SK-N-SH (cell line): ENCODE measurements at regions of chr11 and their contacts with region 1.

Region 1: DNA sequence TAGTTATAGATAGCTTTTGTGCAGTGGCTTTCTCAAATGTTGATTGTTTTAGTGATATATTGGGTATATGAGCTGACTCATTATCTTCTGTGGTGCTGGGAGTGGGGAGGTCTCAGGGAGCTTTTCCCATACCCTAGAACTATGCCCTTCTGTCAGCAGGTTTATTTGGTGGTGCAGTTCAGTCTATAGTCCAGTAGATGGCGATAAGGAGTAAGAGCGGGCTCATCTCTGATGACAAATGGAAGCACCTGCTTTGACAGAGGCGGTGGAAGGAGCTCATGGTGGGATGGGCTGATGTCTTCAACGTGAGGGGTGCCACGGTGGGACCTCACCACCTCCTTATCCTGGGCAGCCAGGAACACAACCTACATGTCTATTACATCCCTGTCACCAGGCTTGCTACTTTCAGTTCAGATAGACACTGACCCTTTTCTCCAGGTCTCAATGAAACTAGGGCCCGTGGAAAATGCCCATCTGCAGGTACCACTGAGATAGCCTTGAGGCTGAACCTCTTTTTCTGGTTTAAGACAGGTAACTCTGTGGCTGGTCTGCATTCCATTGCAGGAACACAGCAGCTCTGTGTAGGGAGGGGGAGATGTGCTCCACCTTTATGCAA is 13.0 kb upstream of the OR6A2 start:
- DNase-seq: peak; percentile 57
- H3K4me3 ChIP-seq: no peak overlapping the region; a peak in 1 of 4 replicates
- H3K27ac ChIP-seq: no peak overlapping the region
- H3K4me1 ChIP-seq: no peaks in the 10 kb centered on the region
- H3K27me3 ChIP-seq: no peaks in the 10 kb centered on the region
- CTCF ChIP-seq: peak; percentile 88
- EP300 ChIP-seq: no peak
- RAD21 ChIP-seq: peak; percentile 51

Region 2: GRCh38 chr11:6603287-6604080 is 209.0 kb before region 1 on chr11 and contains the starts of genes ILK and RRP8:
- CTCF ChIA-PET with region 1: no interaction called
- POLR2A ChIA-PET with region 1: no interaction called
- DNase-seq: peak; percentile 96
- H3K4me3 ChIP-seq: peak within 1 kb of the TSS; percentile 67 to 95
- H3K27ac ChIP-seq: peak within 1 kb of the TSS; percentile 79 to 91
- H3K4me1 ChIP-seq: peaks cover 26 to 40% of the 10 kb centered on the region in 2 experiments
- H3K27me3 ChIP-seq: no peaks in the 10 kb centered on the region
- CTCF ChIP-seq: no peak; the same call in 1 of the 2 replicates
- EP300 ChIP-seq: peak; percentile 8 to 35; a peak in 2 of 4 replicates
- RAD21 ChIP-seq: peak; percentile 5; the same call in 1 of the 2 replicates
- polyA plus RNA-seq, gene ILK: 241 and 268 TPM in 2 replicates
- polyA plus RNA-seq, gene RRP8: 7.8 and 8.6 TPM in 2 replicates

Region 3: DNA sequence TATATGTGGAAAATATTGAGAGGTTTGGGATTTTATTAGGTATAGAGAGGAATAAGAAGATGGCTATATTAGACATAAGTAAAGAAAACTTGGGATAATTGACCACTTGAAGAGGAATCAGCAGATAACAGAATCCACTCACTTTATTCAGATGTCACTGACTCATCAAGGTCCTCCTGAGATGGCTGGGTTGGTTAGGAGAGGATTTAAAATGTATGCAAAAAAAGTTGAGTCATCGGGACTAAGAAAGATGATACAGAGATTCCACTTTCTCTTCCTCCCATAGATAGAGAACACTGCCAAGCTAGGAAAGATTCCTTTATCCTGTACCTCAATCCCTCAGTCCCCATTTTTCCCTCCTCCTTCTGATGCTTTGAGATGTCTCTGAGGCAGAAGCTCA is 13.1 kb before region 1 on chr11 and contains the start of gene OR6A2:
- CTCF ChIA-PET with region 1: interaction called, 11 read pairs
- POLR2A ChIA-PET with region 1: no interaction called
- DNase-seq: no peak
- H3K4me3 ChIP-seq: no peak within 1 kb of the TSS
- H3K27ac ChIP-seq: no peak within 1 kb of the TSS
- H3K4me1 ChIP-seq: no peaks in the 10 kb centered on the region
- H3K27me3 ChIP-seq: no peaks in the 10 kb centered on the region; the same call in 1 of the 2 replicates
- CTCF ChIP-seq: no peak
- EP300 ChIP-seq: no peak
- RAD21 ChIP-seq: no peak
- polyA plus RNA-seq, gene OR6A2: not detected in 2 replicates

Region 4: DNA sequence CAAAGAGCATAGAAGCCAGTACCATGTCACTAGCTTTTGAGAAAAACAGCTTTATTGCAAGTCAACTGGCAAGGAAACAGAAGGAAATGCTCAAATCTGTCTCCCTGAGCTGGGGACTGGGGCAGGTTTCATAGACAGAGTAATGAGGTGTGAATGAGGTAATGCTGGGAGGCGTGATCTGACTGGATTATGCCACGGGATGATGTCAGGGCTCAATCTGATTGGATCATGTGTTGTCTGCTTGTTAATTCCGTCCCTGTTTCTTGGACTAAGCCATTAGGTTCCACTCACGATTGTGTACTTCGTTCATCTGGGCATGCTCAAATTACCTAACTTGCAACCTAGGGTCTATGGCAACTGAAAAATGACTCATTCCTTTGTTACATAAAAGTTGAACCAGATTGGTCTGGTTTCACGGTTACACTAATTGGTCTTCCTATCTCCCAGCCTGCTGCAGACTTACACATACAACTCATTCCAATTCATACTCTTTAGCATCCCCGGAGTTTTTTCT is 12.8 kb after region 1 on chr11:
- CTCF ChIA-PET with region 1: interaction called, 15 read pairs
- POLR2A ChIA-PET with region 1: interaction called, 3 read pairs
- DNase-seq: no peak
- H3K4me3 ChIP-seq: no peak overlapping the region
- H3K27ac ChIP-seq: no peak overlapping the region
- H3K4me1 ChIP-seq: no peaks in the 10 kb centered on the region
- H3K27me3 ChIP-seq: no peaks in the 10 kb centered on the region
- CTCF ChIP-seq: no peak
- EP300 ChIP-seq: no peak
- RAD21 ChIP-seq: no peak

Region 5: GRCh38 chr11:6833356-6833755 is 20.9 kb after region 1 on chr11:
- CTCF ChIA-PET with region 1: interaction called, 10 read pairs
- POLR2A ChIA-PET with region 1: no interaction called
- DNase-seq: no peak
- H3K4me3 ChIP-seq: no peak overlapping the region
- H3K27ac ChIP-seq: no peak overlapping the region
- H3K4me1 ChIP-seq: no peaks in the 10 kb centered on the region
- H3K27me3 ChIP-seq: no peaks in the 10 kb centered on the region
- CTCF ChIP-seq: no peak
- EP300 ChIP-seq: no peak
- RAD21 ChIP-seq: no peak

Region 6: DNA sequence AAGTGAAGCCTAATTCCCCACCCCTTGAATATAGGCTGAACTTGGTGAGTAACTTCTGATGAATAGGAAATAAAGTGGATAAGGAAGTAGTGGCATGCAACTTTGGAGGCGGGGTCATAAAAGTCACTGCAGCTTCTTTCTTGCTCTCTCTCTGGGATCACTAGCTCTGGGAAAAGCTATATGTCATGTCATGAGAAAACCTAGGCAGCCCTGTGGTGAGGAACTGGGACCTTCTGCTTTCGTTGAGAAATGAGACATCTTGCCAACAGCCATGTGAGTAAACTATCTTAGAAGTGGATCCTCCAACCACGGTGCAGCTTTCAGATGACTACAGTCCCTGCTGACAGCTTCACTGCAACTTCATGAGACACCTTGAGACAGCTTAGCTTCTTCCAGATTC is 192.0 kb after region 1 on chr11:
- CTCF ChIA-PET with region 1: no interaction called
- POLR2A ChIA-PET with region 1: no interaction called
- DNase-seq: no peak
- H3K4me3 ChIP-seq: no peak overlapping the region
- H3K27ac ChIP-seq: no peak overlapping the region
- H3K4me1 ChIP-seq: no peaks in the 10 kb centered on the region
- H3K27me3 ChIP-seq: no peaks in the 10 kb centered on the region
- CTCF ChIP-seq: no peak
- EP300 ChIP-seq: no peak
- RAD21 ChIP-seq: no peak